ENCODE measurements at regions of chr21 and their contacts with region 1.

Region 1: GRCh38 chr21:38095220-38095619 is 161.6 kb upstream of the KCNJ15 start:
- DNase-seq: no peak
- ATAC-seq: no peak
- H3K4me3 ChIP-seq: no peak overlapping the region
- H3K4me3 Mint-ChIP-seq: no peak overlapping the region
- H3K27ac ChIP-seq: no peak overlapping the region
- H3K27ac Mint-ChIP-seq: no peak overlapping the region
- H3K4me1 ChIP-seq: no peaks in the 10 kb centered on the region
- H3K4me1 Mint-ChIP-seq: no peaks in the 10 kb centered on the region
- H3K27me3 ChIP-seq: no peaks in the 10 kb centered on the region
- H3K27me3 Mint-ChIP-seq: peaks cover 41% of the 10 kb centered on the region
- CTCF ChIP-seq: no peak

Region 2: DNA sequence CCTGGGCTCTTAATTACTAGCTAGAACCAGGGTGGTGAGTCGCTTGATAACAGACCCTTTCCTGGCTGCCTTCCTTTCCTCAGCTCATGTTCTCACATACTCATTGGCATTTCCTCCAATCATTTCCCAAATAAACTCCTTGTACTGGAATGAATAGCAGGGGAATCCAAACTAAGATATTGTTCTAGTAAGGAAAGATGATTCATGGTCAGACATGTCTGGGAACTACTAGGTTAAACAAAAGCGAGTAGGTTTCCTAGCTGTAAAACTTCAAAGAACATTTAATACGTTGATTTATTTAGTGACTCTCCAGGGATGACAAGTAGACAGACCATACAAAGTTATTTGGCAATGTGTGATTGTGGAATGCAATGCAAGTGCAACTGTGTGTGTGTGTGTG is 57.8 kb before region 1 on chr21:
- CTCF ChIA-PET with region 1: no interaction called
- POLR2A ChIA-PET with region 1: no interaction called
- intact Hi-C with region 1: loop called in 1 of 2 experiments (anchors 10 kb)
- DNase-seq: no peak
- ATAC-seq: no peak
- H3K4me3 ChIP-seq: no peak overlapping the region
- H3K4me3 Mint-ChIP-seq: no peak overlapping the region
- H3K27ac ChIP-seq: no peak overlapping the region
- H3K27ac Mint-ChIP-seq: no peak overlapping the region
- H3K4me1 ChIP-seq: no peaks in the 10 kb centered on the region
- H3K4me1 Mint-ChIP-seq: no peaks in the 10 kb centered on the region
- H3K27me3 ChIP-seq: peaks cover 0 to 2% of the 10 kb centered on the region in 2 experiments
- H3K27me3 Mint-ChIP-seq: peaks cover 13% of the 10 kb centered on the region
- CTCF ChIP-seq: no peak